ENCODE measurements at regions of chr21 and their contacts with region 1.

Region 1: DNA sequence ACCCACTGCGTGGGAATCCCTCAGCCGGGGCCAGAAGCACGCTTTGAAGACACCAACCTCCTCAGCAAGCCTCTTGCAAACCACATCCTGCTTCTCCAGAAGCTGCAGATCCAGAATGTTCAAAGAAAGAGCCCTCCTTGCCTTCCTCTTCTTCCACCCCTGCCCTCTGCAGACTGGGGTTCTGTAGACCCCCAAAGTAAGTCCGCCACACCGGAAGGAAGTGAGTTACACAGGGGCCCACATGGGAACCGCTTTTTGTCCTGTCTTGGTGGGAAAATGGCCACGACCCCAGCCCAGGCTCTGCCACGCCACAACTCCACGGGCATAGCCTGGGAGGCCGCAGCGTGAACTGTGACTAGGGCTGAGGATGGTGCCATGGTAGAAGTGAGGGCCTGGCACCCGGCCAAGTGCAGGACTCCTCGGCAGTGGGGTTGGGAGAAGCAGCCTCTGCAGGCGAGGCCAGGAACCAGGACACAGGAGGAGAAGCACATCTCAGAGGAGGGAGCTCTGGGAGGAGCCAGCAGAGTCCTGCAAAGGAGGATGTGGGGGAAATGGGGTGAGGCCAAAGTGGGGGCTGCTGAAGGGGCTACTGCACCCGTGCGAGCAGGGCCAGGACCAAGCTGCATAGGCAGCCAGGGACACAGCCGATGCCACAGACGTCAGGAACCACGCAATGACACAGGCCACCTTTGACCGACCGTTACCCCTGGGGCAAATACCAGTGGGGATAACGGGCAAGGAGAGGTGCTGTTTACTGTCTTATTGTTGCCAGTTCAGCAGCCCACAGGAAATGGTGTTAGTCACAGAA is 30.9 kb downstream of the PDE9A start:
- DNase-seq: peak; percentile 56
- H3K4me3 Mint-ChIP-seq: peak overlapping the region; percentile 84
- H3K27ac Mint-ChIP-seq: peak overlapping the region; percentile 100
- H3K4me1 Mint-ChIP-seq: peaks cover 47% of the 10 kb centered on the region
- H3K27me3 Mint-ChIP-seq: no peaks in the 10 kb centered on the region

Region 2: GRCh38 chr21:42524349-42525151 is 159.8 kb before region 1 on chr21:
- intact Hi-C with region 1: loop called (anchors 5 kb)
- DNase-seq: no peak
- H3K4me3 Mint-ChIP-seq: no peak overlapping the region
- H3K27ac Mint-ChIP-seq: no peak overlapping the region
- H3K4me1 Mint-ChIP-seq: peaks cover 40% of the 10 kb centered on the region
- H3K27me3 Mint-ChIP-seq: no peaks in the 10 kb centered on the region

Region 3: GRCh38 chr21:42614811-42615659 is 69.3 kb before region 1 on chr21:
- intact Hi-C with region 1: loop called (anchors 5 kb)
- DNase-seq: peak; percentile 55
- H3K4me3 Mint-ChIP-seq: no peak overlapping the region
- H3K27ac Mint-ChIP-seq: no peak overlapping the region
- H3K4me1 Mint-ChIP-seq: no peaks in the 10 kb centered on the region
- H3K27me3 Mint-ChIP-seq: peaks cover 22% of the 10 kb centered on the region

Region 4: DNA sequence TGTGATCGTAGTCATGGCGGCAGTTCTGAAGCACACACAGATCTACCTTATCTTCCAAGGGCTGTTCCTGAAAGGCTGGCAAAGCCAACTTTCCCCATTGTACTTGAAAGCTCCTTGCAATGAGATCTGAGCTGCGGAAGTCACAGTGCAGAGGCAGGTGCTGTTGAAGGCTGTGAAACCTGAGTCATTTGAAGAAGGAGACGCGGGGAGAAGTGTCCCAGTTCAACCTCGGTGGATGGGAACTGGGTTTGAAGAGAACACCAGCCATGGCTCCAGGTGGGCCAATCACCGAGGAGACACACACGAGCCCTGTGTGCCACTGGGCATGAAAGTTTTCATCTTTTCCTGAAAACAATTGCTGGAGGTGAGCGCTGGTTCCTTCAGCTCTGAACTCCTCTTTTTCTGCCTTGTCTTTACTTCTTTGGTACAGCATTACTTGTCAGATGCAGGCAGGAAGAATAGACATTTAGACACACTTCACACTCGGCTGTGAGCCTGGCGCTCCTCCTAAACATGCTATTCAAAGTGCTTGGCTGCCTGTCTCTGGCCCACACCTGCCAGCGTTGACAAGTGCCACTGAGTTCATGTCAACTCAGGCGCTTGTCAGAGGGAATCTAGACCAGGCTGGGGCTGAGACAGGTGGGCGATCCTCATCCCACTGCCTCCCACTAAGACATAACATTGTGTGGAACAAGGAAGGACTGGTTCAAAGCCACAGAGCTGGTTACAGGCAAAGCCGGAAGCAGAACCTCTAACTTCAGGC is 56.6 kb before region 1 on chr21:
- intact Hi-C with region 1: no loop called
- DNase-seq: no peak
- H3K4me3 Mint-ChIP-seq: no peak overlapping the region
- H3K27ac Mint-ChIP-seq: no peak overlapping the region
- H3K4me1 Mint-ChIP-seq: no peaks in the 10 kb centered on the region
- H3K27me3 Mint-ChIP-seq: peaks cover 17% of the 10 kb centered on the region

Region 5: DNA sequence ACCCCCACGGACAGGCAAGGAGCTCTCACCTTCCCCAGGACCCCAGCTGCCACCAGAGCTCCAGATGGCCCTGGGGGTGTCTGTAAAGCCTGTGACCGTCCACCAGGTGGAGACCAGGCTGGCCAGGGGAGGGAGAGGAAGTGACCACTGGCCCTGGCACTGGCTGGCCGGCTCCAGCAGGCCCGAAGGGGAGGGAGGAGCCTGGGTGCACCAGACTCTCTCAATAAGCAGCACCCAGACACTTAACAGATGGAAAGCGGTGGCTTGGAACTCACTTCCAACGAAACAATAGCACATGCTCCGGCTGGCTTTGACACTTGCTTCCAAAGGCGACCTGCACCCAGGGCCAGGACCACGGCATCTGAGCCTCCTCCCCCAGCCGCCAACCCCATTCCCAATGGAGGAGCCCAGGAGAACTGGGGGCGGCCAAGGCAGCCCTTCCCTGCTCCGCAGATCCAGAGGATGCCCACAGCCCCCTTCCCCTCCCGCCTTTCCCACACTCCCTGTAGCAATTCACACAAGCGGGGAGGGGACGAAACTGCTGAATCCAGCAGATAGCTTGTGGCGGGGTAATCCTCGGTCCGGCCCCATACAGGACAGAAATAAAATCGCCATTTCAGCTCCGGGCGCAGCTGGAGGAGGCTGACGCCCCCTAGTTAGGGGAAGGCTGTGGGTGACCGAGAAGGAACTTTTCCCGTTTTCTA is 31.6 kb before region 1 on chr21:
- intact Hi-C with region 1: loop called (anchors 2 kb)
- DNase-seq: no peak
- H3K4me3 Mint-ChIP-seq: peak overlapping the region; percentile 77
- H3K27ac Mint-ChIP-seq: peak overlapping the region; percentile 42
- H3K4me1 Mint-ChIP-seq: peaks cover 8% of the 10 kb centered on the region
- H3K27me3 Mint-ChIP-seq: peaks cover 29% of the 10 kb centered on the region

Region 6: DNA sequence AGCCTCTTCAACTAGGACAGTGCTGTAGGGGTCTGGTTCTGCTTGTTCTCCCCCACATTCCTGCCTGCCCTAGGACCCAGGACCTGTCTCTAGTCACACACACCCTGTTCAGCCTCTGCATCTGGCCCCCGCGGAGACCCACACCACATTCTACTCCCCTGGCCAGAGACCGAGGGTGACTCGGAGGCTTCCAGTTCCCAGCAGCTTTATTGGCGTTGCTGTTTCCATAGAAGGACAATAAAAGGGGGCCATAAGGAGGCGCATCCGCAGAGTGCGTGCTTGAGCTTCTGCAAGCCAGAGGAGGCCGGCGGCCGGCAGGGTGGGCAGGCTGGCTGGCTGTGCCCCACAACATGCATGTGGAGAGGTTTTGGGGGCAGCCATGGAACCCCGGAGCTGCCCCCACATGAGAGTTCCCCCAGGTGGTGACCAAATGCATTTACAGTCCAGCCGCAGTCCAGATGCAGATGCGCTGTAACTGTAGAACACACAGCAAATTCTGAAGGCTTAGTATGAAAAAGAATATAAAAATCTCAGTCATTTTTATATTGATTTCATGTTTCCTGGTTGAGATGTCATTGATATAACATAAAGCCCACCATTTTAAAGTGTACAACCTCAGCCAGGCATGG is 21.5 kb after region 1 on chr21:
- intact Hi-C with region 1: no loop called
- DNase-seq: no peak
- H3K4me3 Mint-ChIP-seq: no peak overlapping the region
- H3K27ac Mint-ChIP-seq: no peak overlapping the region
- H3K4me1 Mint-ChIP-seq: peaks cover 2% of the 10 kb centered on the region
- H3K27me3 Mint-ChIP-seq: no peaks in the 10 kb centered on the region

Region 7: DNA sequence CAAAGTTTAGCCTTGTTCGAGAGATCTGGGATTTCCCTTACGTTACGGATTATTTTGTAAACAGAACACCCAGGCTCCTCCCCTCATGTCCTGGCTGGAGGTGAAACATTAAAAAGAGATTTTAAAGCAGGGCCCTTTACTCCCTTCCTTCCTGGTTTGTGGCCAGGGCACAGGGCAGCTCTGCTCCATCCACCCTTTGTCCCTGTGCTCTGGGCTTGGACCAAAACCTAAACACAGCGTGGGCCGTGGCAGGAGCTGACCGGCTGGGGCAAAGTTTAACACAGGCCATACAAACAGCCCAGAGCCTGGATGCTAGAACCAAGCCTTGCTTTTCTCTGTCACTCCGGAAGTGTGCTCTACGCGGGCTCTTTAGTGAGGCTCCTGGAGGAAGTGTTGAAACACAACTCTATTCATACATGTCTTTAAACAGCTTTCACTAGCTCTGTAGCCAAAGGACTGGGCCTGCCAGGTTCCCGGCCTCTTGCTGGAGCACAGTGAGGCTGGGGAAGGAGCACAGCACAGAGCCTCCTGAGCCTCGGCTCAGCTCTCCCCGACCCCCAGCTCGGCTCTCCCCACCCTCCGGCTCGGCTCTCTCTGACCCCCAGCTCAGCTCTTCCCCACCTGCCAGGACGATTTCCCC is 53.8 kb after region 1 on chr21:
- intact Hi-C with region 1: loop called (anchors 2 kb)
- DNase-seq: no peak
- H3K4me3 Mint-ChIP-seq: peak overlapping the region; percentile 33
- H3K27ac Mint-ChIP-seq: peak overlapping the region; percentile 97
- H3K4me1 Mint-ChIP-seq: peaks cover 49% of the 10 kb centered on the region
- H3K27me3 Mint-ChIP-seq: no peaks in the 10 kb centered on the region

Region 8: DNA sequence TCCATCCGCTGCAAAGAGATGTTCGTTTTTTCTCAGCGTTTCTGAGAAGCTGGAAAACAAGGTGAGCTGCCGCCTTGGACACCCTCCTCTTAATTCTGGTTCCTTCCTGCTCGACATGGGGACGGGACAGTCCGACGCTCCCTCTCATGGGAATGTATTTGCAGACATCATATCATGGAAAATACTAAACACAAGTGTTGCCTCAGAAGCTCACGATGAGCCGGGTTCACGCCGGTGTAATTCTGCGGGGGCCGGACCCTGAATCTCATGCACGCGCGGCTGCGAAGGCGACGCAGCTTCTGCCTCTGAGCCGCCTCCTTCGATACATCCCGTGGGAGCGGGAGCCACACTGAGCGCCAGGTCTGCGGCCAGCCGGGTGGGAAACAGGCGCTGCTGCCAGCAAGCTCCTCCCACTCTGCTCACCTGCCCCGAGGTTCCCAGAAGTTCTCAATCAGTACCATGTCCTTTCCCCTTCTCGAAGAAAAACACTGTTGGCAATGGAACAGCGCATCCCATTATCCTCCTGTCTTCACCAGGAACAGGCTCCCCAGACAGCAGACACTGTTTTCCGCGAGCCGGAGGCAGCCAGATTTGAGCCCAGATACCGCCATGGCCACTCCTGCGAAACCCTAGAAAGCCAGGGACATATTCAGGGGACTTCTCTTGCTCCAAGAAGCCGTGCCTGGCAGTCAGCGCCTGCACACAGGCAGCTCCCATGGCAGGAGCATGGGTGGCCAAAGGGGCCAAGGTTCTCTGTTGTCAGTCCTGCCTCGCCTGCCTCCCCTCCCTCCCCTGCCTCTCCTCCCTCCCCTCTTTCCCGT is 97.0 kb after region 1 on chr21:
- intact Hi-C with region 1: loop called (anchors 5 kb)
- DNase-seq: no peak
- H3K4me3 Mint-ChIP-seq: no peak overlapping the region
- H3K27ac Mint-ChIP-seq: no peak overlapping the region
- H3K4me1 Mint-ChIP-seq: peaks cover 27% of the 10 kb centered on the region
- H3K27me3 Mint-ChIP-seq: peaks cover 27% of the 10 kb centered on the region

Region 9: DNA sequence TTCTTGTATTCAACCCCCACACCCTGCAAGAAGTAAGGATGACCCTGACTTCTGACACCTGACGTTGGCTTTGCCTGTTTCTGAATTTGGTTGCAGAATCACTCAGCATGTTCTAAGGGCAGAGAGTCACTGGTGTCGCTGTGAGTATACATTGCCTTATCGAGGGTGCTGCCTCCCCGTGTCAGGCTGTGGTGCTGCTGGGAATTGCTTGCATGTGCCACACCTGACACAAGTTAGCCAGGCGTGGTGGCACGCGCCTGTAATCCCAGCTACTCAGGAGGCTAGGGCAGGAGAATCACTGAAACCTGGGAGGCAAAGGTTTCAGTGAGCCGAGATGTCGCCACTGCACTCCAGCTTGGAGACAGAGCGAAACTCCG is 149.1 kb after region 1 on chr21:
- intact Hi-C with region 1: loop called (anchors 5 kb)
- DNase-seq: peak; percentile 58
- H3K4me3 Mint-ChIP-seq: peak overlapping the region; percentile 49
- H3K27ac Mint-ChIP-seq: no peak overlapping the region
- H3K4me1 Mint-ChIP-seq: peaks cover 20% of the 10 kb centered on the region
- H3K27me3 Mint-ChIP-seq: peaks cover 3% of the 10 kb centered on the region